ENCODE measurements at regions of chr4 and their contacts with region 1.

Region 1: DNA sequence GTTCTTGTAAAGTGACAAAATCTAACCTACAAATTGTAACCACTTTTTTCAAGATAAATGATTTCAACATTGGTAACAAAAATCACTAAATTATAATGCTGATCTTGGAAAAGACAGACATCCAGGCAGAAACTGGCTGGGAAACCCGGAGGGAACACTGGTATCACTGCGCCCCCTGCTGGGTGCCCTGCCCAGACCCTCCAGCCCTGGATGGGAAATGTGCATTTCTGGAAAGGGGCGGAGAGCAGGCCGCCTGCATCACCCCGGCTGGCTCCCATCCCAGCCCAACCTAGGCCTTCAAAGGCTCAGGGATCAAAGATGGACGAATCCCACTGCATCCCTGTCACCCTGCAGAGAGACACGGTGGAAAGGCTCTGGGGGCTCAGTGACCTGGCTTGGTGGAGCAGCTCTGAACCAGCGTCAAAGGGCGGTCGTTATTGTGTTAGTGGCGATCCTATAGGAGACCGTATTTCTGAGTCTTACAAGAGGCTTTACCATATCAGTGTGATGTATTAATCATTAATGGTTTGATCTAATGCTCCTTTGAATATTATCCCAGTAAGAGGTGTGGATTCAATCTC is 37.3 kb downstream of the ACOX3 start:
- DNase-seq: peak; percentile 59 to 72
- ATAC-seq: peak; percentile 82 to 86
- H3K4me3 ChIP-seq: no peak overlapping the region
- H3K27ac ChIP-seq: peak overlapping the region; percentile 7 to 62 (median 47)
- H3K4me1 ChIP-seq: peaks cover 11 to 15% of the 10 kb centered on the region in 2 donors
- H3K27me3 ChIP-seq: no peaks in the 10 kb centered on the region
- CTCF ChIP-seq: peak; percentile 90 to 95 (median 93)
- POLR2A ChIP-seq: no peak

Region 2: DNA sequence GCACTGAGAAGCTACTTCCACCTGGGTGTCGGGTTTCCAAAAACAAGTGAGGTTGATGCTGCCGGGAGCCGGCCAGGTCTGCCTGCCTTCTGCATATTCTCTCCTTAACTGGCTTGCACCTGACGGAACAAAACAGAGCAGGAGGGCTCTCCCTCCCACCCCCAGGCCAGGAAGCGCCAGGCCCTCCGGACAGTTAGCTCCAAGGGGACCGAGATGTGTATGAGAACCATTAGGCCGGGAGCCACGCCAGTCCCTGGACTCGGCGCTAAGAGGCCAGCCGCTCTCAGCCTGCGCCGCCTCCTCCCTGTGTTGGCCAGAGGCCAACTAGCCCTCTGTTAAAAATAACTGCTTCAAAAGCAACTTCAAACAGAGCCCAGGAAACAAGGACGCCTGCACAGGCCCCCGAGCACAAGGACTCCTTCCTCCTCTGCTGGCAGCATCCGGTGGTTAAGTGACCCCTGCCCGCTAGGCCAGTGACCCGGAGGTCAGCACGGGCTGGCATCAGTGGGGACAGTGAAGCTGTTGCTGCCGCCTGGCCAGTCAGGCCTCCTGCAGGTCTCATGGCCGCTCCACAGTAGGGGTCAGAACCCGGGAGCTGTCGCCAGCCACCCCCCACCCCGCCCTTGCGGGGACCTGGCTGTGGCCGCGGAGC is 352.6 kb before region 1 on chr4:
- in situ Hi-C with region 1: no loop called
- intact Hi-C with region 1: no loop called
- DNase-seq: peak; percentile 58 to 86
- ATAC-seq: peak; percentile 63 to 75
- H3K4me3 ChIP-seq: peak overlapping the region in 3 of 4 donors; percentile 0 to 5 (median 4)
- H3K27ac ChIP-seq: peak overlapping the region; percentile 82 to 92 (median 86)
- H3K4me1 ChIP-seq: peaks cover 45 to 51% of the 10 kb centered on the region in 2 donors
- H3K27me3 ChIP-seq: no peaks in the 10 kb centered on the region
- CTCF ChIP-seq: no peak
- POLR2A ChIP-seq: peak in 1 of 2 donors; percentile 30

Region 3: DNA sequence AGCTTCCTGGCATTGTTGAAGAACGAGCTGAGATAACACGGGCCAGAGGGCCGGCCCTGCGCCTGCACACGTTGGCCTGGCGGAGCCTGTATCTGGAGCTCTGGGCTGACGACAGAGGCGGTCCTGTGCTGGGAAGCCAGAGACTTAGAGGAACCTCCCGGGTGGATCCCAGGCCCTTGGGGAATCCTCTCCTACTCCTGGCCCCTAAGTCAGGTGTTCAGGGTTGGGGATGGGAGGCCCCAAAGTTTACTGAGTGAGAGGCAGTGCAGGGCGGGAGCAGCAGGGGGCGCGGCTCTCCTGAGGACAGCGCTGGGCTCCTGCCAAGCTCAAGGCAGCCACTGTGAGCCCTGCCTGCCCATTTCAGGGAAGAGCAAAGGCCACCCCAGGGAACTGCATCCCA is 136.2 kb before region 1 on chr4:
- in situ Hi-C with region 1: no loop called
- intact Hi-C with region 1: loop called (anchors 2 kb)
- DNase-seq: peak in 1 of 2 donors; percentile 60
- ATAC-seq: peak; percentile 40 to 41
- H3K4me3 ChIP-seq: no peak overlapping the region
- H3K27ac ChIP-seq: no peak overlapping the region
- H3K4me1 ChIP-seq: no peaks in the 10 kb centered on the region
- H3K27me3 ChIP-seq: no peaks in the 10 kb centered on the region
- CTCF ChIP-seq: peak in 4 of 5 experiments; percentile 33 to 65 (median 58)
- POLR2A ChIP-seq: no peak

Region 4: GRCh38 chr4:8274765-8275547 is 128.3 kb before region 1 on chr4:
- in situ Hi-C with region 1: no loop called
- intact Hi-C with region 1: loop called (anchors 1 kb)
- DNase-seq: peak; percentile 69 to 90
- ATAC-seq: peak; percentile 69 to 81
- H3K4me3 ChIP-seq: no peak overlapping the region
- H3K27ac ChIP-seq: peak overlapping the region; percentile 40 to 65 (median 42)
- H3K4me1 ChIP-seq: peaks cover 29 to 43% of the 10 kb centered on the region in 2 donors
- H3K27me3 ChIP-seq: no peaks in the 10 kb centered on the region
- CTCF ChIP-seq: peak in 4 of 5 experiments; percentile 21 to 59 (median 48)
- POLR2A ChIP-seq: no peak

Region 5: GRCh38 chr4:8315435-8316250 is 87.6 kb before region 1 on chr4:
- in situ Hi-C with region 1: loop called in 2 of 4 experiments (anchors 10 kb)
- intact Hi-C with region 1: no loop called
- DNase-seq: peak in 1 of 2 donors; percentile 54
- ATAC-seq: peak in 1 of 2 donors; percentile 57
- H3K4me3 ChIP-seq: no peak overlapping the region
- H3K27ac ChIP-seq: no peak overlapping the region
- H3K4me1 ChIP-seq: peaks cover 20 to 25% of the 10 kb centered on the region in 2 donors
- H3K27me3 ChIP-seq: no peaks in the 10 kb centered on the region
- CTCF ChIP-seq: no peak
- POLR2A ChIP-seq: no peak